Heart left ventricle (tissue), 16 donors: ENCODE measurements at regions of chr2 and their contacts with region 1.

Region 1: DNA sequence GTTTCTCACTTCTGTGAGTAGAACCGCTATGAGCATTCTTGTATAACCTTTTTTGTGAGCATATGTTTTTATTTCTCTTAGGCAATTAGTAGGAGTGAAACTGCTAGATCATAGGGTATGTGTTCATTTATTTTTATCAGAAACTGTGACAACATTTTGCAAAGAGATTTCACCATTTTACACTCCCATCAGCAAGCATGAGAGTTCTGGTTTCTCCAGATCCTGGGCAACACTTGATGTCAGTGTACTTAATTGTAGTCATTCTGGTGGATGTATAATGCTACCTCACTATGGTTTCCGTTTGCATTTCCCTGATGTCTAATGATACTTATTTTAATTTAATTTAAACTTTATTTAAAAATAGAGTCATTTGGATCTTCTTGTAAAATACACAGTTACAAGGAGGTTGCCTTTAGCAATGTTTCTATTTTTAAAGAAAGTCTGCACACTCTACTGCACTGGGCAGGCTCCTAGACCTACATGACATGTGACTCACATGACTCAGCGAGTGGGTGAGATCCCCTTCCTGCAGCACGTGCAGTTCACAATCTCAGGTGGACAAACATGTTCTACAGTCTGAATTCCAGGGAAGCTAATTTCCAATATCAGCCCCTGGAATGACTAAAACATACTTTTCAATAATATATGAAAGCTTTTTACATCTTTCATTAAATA is 127.0 kb upstream of the BCL2L11 start:
- DNase-seq: no peak
- ATAC-seq: peak in 3 of 4 donors; percentile 80 to 86 (median 80)
- H3K4me3 ChIP-seq: no peak overlapping the region
- H3K27ac ChIP-seq: peak overlapping the region in 1 of 12 donors; percentile 21
- H3K4me1 ChIP-seq: peaks cover 0 to 20% (median 0%) of the 10 kb centered on the region in 12 donors
- H3K27me3 ChIP-seq: peaks cover 0 to 5% (median 0%) of the 10 kb centered on the region in 9 donors
- CTCF ChIP-seq: no peak
- POLR2A ChIP-seq: no peak

Region 2: GRCh38 chr2:110940376-110940910 is 53.3 kb before region 1 on chr2:
- intact Hi-C with region 1: loop called in 1 of 10 experiments (anchors 5 kb)
- DNase-seq: no peak
- ATAC-seq: no peak
- H3K4me3 ChIP-seq: no peak overlapping the region
- H3K27ac ChIP-seq: no peak overlapping the region
- H3K4me1 ChIP-seq: no peaks in the 10 kb centered on the region
- H3K27me3 ChIP-seq: peaks cover 0 to 2% (median 0%) of the 10 kb centered on the region in 9 donors
- CTCF ChIP-seq: no peak
- POLR2A ChIP-seq: no peak